Breast epithelium (tissue), 4 donors: ENCODE measurements at regions of chr11 and their contacts with region 1.

Region 1: GRCh38 chr11:93591247-93591898 is 48.2 kb upstream of the SMCO4 start:
- DNase-seq: no peak
- H3K4me3 ChIP-seq: no peak overlapping the region
- H3K27ac ChIP-seq: no peak overlapping the region
- H3K4me1 ChIP-seq: no peaks in the 10 kb centered on the region
- H3K27me3 ChIP-seq: no peaks in the 10 kb centered on the region
- CTCF ChIP-seq: no peak
- POLR2A ChIP-seq: no peak

Region 2: DNA sequence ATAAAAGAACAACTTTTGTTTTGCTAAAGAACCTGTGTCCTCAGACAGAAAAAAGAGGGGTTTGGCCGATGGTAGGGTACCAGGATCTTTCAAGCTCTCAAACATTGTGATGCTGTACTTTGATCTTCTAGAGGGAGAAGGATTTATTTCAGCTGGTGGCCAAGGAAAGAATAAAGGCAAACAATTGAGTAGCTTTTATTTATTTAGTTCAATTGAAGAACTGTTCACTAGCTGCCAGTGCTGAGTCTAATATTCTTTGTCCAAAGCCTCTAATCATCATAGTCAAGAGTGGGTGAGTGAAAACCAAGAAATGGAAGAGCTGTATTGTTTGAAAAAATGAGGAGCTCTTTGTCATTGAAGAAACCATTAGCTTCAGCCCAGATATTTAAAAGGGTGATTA is 1228.4 kb before region 1 on chr11:
- intact Hi-C with region 1: loop called (anchors 5 kb)
- DNase-seq: no peak
- H3K4me3 ChIP-seq: no peak overlapping the region
- H3K27ac ChIP-seq: no peak overlapping the region
- H3K4me1 ChIP-seq: no peaks in the 10 kb centered on the region
- H3K27me3 ChIP-seq: no peaks in the 10 kb centered on the region
- CTCF ChIP-seq: no peak
- POLR2A ChIP-seq: no peak